Mucosa of descending colon (tissue), 3 donors: ENCODE measurements at regions of chr2 and their contacts with region 1.

Region 1: DNA sequence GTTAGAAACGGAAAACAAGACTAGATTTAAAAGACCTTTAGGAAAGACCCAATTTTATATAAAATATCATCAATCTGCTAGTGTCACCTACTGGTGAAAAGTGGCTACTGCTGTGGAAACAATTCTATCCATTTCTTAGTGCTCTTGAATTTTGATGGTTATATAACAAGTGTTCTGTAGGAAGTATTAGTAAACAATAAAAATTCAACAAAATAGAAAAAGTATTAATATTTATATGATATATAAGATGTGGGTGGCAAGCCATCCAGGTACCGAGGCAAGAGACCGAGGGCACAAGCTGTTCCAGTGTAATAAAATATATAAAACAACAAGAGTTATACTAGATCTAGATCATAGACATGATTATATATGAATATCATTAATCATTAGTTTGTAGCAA is 6.2 kb upstream of the TMEM87B start:
- DNase-seq: peak in 1 of 3 donors; percentile 81
- ATAC-seq: peak; percentile 76
- H3K4me3 ChIP-seq: no peak overlapping the region
- H3K4me1 ChIP-seq: peaks cover 23% of the 10 kb centered on the region
- CTCF ChIP-seq: peak; percentile 17

Region 2: GRCh38 chr2:111883661-111884591 is 165.0 kb before region 1 on chr2 and contains the start of gene ANAPC1:
- intact Hi-C with region 1: loop called in 1 of 2 experiments (anchors 5 kb)
- DNase-seq: peak; percentile 89 to 90 (median 90)
- ATAC-seq: peak; percentile 97
- H3K4me3 ChIP-seq: peak within 1 kb of the TSS; percentile 79
- H3K4me1 ChIP-seq: peaks cover 12% of the 10 kb centered on the region
- CTCF ChIP-seq: no peak
- total RNA-seq, gene ANAPC1: 29.4 to 40.9 (median 34.6) TPM

Region 3: DNA sequence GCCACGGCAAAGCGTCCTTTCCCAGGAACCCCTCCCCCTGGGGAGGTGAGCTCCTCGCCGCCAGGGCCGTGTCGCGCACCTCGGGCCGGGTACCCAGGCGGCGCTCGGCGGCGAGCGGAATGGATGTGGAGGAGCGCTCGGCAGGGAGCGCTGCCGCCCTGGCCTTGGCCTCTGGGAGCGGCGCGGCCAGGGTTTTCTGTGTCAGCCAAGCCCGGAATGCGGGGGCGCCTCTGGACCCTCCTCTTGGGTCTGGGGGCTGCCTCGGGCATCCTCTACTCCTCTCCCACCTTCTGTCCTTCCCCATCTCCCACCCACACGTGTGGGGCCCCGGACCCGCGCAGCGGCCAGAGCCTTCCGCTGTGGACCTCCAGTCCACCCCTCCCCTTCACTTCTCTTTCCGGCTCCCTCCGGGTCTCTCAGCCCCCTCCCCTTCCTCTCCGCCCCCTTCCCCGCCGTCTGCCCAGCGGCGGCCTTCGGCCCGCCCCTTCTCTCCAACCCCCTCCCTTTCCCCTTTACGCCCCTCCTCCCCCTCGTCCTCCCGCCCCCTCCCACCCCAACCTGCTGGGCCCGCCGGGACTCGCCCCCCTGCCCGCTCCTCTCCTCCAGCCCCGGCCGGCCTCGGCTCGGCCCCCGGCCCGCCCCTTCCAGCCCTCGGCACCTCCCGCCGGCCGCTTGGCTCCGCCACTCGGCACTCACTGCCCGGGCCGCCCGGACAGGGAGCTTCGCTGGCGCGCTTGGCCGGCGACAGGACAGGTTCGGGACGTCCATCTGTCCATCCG is 150.8 kb before region 1 on chr2 and contains the start of gene MERTK:
- intact Hi-C with region 1: loop called (anchors 5 kb)
- DNase-seq: peak; percentile 75 to 86 (median 83)
- ATAC-seq: peak; percentile 89
- H3K4me3 ChIP-seq: peak within 1 kb of the TSS; percentile 60
- H3K4me1 ChIP-seq: peaks cover 6% of the 10 kb centered on the region
- CTCF ChIP-seq: no peak
- total RNA-seq, gene MERTK: 9.3 to 17.2 (median 13.7) TPM

Region 4: DNA sequence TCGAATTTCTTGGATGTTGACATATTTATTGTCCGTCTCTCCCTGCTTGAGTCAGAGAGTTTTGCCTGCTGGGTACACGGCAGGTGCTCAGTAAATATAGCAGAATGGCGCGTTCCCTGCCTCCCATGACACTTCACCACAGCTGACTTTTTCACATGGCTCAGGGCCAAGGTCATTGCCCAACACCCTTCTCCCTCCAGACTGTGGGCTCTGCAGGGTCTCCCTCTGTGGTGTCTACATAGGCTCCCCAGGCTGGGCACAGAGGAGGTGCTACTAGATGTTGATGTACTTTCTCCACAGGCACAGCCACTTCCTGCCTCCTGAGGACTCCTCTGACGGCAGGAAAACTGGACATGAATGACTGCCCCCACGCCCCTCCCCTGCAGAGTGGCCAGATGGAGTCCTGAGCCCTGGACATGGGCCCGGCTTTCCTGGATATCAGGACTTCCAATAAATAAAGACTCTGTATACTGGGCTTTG is 539.7 kb after region 1 on chr2:
- intact Hi-C with region 1: no loop called
- DNase-seq: no peak
- ATAC-seq: no peak
- H3K4me3 ChIP-seq: no peak overlapping the region
- H3K4me1 ChIP-seq: peaks cover 10% of the 10 kb centered on the region
- CTCF ChIP-seq: no peak